ENCODE measurements at regions of chr6 and their contacts with region 1.

Region 1: DNA sequence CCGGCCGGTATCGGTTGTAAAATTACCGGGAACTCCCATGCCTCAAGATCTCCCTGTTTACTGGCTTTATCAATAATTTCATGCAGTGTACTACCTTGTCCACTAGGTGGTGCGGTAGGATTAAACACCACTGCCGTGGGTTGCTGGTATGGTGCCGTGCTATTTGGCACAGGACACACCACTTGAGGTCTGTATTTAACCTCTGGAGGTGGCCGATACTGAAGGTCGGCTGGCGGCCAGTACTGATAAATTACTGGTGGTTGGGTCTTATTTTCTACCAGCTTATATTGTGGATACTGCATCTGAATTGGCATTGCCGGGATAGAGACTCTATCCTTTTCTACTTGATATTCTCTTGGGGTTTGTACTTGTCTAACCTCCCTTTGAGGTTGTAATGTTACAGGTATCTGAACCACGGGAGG is 14.3 kb upstream of the PTCRA start:
- DNase-seq: peak; percentile 34 to 82 (median 76)
- ATAC-seq: peak; percentile 100
- H3K4me3 ChIP-seq: no peak overlapping the region
- H3K4me3 Mint-ChIP-seq: peak overlapping the region in 1 of 10 donors; percentile 65
- H3K27ac ChIP-seq: no peak overlapping the region
- H3K27ac Mint-ChIP-seq: peak overlapping the region in 1 of 9 donors; percentile 18
- H3K4me1 ChIP-seq: no peaks in the 10 kb centered on the region
- H3K4me1 Mint-ChIP-seq: peaks cover 0 to 17% (median 5%) of the 10 kb centered on the region in 7 donors
- H3K27me3 ChIP-seq: no peaks in the 10 kb centered on the region
- H3K27me3 Mint-ChIP-seq: peaks cover 0 to 6% (median 0%) of the 10 kb centered on the region in 5 donors

Region 2: DNA sequence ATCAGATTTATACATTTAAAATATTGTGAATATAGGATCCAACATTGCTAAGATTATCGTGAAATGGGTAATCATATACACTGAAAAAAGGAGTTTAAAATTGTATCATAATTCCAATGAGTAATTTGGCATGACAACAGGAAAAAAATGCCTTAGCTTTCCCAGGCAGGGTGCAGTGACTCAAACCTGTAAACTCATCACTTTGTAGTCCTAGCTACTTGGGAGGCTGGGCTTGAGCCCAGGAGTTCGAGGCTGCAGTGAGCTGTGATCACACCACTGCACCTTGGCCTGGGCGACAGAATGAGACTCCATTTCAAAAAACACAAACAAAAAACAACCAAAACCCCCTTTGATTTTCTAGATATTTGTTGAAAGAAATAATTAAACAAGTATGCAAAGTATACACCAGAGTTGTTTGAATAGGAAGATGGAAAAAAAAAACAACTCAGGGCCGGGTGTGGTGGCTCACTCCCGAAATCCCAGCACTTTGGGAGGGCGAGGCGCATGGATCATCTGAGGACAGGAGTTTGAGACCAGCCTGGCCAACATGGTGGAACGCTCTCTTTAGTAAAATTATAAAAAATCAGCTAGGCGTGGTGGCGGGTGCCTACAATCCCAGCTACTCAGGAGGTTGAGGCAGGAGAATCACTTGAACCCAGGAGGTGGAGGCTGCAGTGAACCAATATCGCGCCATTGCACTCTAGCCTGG is 548.5 kb before region 1 on chr6:
- CTCF ChIA-PET with region 1: no interaction called
- POLR2A ChIA-PET with region 1: no interaction called
- intact Hi-C with region 1: no loop called
- DNase-seq: no peak
- ATAC-seq: no peak
- H3K4me3 ChIP-seq: no peak overlapping the region
- H3K4me3 Mint-ChIP-seq: no peak overlapping the region
- H3K27ac ChIP-seq: no peak overlapping the region
- H3K27ac Mint-ChIP-seq: no peak overlapping the region
- H3K4me1 ChIP-seq: peaks cover 0 to 8% of the 10 kb centered on the region in 2 donors
- H3K4me1 Mint-ChIP-seq: peaks cover 5 to 18% (median 10%) of the 10 kb centered on the region in 7 donors
- H3K27me3 ChIP-seq: no peaks in the 10 kb centered on the region
- H3K27me3 Mint-ChIP-seq: no peaks in the 10 kb centered on the region

Region 3: GRCh38 chr6:42661540-42662153 is 239.9 kb before region 1 on chr6:
- CTCF ChIA-PET with region 1: interaction called, 6 read pairs
- POLR2A ChIA-PET with region 1: interaction called, 3 read pairs
- intact Hi-C with region 1: loop called (anchors 1 kb)
- DNase-seq: peak; percentile 73 to 89 (median 81)
- ATAC-seq: peak; percentile 99
- H3K4me3 ChIP-seq: no peak overlapping the region
- H3K4me3 Mint-ChIP-seq: no peak overlapping the region
- H3K27ac ChIP-seq: no peak overlapping the region
- H3K27ac Mint-ChIP-seq: peak overlapping the region in 8 of 9 donors; percentile 0 to 59 (median 26)
- H3K4me1 ChIP-seq: no peaks in the 10 kb centered on the region
- H3K4me1 Mint-ChIP-seq: peaks cover 0 to 6% (median 0%) of the 10 kb centered on the region in 7 donors
- H3K27me3 ChIP-seq: no peaks in the 10 kb centered on the region
- H3K27me3 Mint-ChIP-seq: no peaks in the 10 kb centered on the region

Region 4: DNA sequence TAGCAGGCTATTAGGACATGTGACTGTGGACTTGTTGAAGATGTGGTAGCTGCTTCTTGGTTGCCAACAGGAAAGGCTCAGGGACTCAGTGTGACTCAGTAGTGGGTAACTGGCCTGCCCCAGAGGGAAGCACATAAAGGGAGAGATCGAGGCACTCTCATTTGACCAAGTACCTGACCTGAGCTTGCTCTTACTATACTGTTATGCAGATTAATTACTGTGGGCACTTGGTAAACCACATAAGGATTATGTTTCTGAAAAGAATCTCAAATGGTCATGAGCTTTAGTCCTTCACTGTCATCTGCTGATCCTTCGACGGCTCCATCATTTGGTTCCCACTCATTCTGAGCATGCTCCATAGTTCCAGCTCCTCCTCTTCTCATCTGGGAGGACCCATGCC is 70.3 kb before region 1 on chr6:
- CTCF ChIA-PET with region 1: no interaction called
- POLR2A ChIA-PET with region 1: no interaction called
- intact Hi-C with region 1: no loop called
- DNase-seq: no peak
- ATAC-seq: no peak
- H3K4me3 ChIP-seq: no peak overlapping the region
- H3K4me3 Mint-ChIP-seq: no peak overlapping the region
- H3K27ac ChIP-seq: no peak overlapping the region
- H3K27ac Mint-ChIP-seq: peak overlapping the region in 6 of 9 donors; percentile 11 to 79 (median 58)
- H3K4me1 ChIP-seq: no peaks in the 10 kb centered on the region
- H3K4me1 Mint-ChIP-seq: peaks cover 11 to 27% (median 15%) of the 10 kb centered on the region in 7 donors
- H3K27me3 ChIP-seq: no peaks in the 10 kb centered on the region
- H3K27me3 Mint-ChIP-seq: no peaks in the 10 kb centered on the region

Region 5: GRCh38 chr6:42890311-42891198 is 11.0 kb before region 1 on chr6:
- CTCF ChIA-PET with region 1: interaction called, 5 read pairs
- POLR2A ChIA-PET with region 1: interaction called, 5 read pairs
- intact Hi-C with region 1: loop called in 1 of 2 experiments (anchors 1 kb)
- DNase-seq: peak; percentile 70 to 90 (median 87)
- ATAC-seq: peak; percentile 99
- H3K4me3 ChIP-seq: peak overlapping the region; percentile 89
- H3K4me3 Mint-ChIP-seq: peak overlapping the region; percentile 94 to 100 (median 98)
- H3K27ac ChIP-seq: peak overlapping the region; percentile 87
- H3K27ac Mint-ChIP-seq: peak overlapping the region; percentile 89 to 99 (median 98)
- H3K4me1 ChIP-seq: peaks cover 0 to 8% of the 10 kb centered on the region in 2 donors
- H3K4me1 Mint-ChIP-seq: peaks cover 0 to 26% (median 14%) of the 10 kb centered on the region in 7 donors
- H3K27me3 ChIP-seq: no peaks in the 10 kb centered on the region
- H3K27me3 Mint-ChIP-seq: no peaks in the 10 kb centered on the region

Region 6: GRCh38 chr6:42984001-42984923 is 82.7 kb after region 1 on chr6 and contains the start of gene PPP2R5D:
- CTCF ChIA-PET with region 1: interaction called, 3 read pairs
- POLR2A ChIA-PET with region 1: no interaction called
- intact Hi-C with region 1: loop called in 1 of 2 experiments (anchors 1 kb)
- DNase-seq: peak; percentile 81 to 98 (median 97)
- ATAC-seq: peak; percentile 97
- H3K4me3 ChIP-seq: peak within 1 kb of the TSS; percentile 64
- H3K4me3 Mint-ChIP-seq: peak within 1 kb of the TSS; percentile 87 to 99 (median 94)
- H3K27ac ChIP-seq: peak within 1 kb of the TSS; percentile 95
- H3K27ac Mint-ChIP-seq: peak within 1 kb of the TSS; percentile 89 to 99 (median 95)
- H3K4me1 ChIP-seq: peaks cover 28 to 40% of the 10 kb centered on the region in 2 donors
- H3K4me1 Mint-ChIP-seq: peaks cover 46 to 71% (median 68%) of the 10 kb centered on the region in 7 donors
- H3K27me3 ChIP-seq: no peaks in the 10 kb centered on the region
- H3K27me3 Mint-ChIP-seq: no peaks in the 10 kb centered on the region
- total RNA-seq, gene PPP2R5D: 19.7 to 60.4 (median 28.2) TPM

Region 7: GRCh38 chr6:43129434-43130194 is 228.1 kb after region 1 on chr6:
- CTCF ChIA-PET with region 1: no interaction called
- POLR2A ChIA-PET with region 1: no interaction called
- intact Hi-C with region 1: loop called in 1 of 2 experiments (anchors 5 kb)
- DNase-seq: peak in 1 of 9 donors; percentile 10
- ATAC-seq: peak; percentile 61
- H3K4me3 ChIP-seq: no peak overlapping the region
- H3K4me3 Mint-ChIP-seq: no peak overlapping the region
- H3K27ac ChIP-seq: no peak overlapping the region
- H3K27ac Mint-ChIP-seq: no peak overlapping the region
- H3K4me1 ChIP-seq: no peaks in the 10 kb centered on the region
- H3K4me1 Mint-ChIP-seq: no peaks in the 10 kb centered on the region
- H3K27me3 ChIP-seq: no peaks in the 10 kb centered on the region
- H3K27me3 Mint-ChIP-seq: no peaks in the 10 kb centered on the region

Region 8: DNA sequence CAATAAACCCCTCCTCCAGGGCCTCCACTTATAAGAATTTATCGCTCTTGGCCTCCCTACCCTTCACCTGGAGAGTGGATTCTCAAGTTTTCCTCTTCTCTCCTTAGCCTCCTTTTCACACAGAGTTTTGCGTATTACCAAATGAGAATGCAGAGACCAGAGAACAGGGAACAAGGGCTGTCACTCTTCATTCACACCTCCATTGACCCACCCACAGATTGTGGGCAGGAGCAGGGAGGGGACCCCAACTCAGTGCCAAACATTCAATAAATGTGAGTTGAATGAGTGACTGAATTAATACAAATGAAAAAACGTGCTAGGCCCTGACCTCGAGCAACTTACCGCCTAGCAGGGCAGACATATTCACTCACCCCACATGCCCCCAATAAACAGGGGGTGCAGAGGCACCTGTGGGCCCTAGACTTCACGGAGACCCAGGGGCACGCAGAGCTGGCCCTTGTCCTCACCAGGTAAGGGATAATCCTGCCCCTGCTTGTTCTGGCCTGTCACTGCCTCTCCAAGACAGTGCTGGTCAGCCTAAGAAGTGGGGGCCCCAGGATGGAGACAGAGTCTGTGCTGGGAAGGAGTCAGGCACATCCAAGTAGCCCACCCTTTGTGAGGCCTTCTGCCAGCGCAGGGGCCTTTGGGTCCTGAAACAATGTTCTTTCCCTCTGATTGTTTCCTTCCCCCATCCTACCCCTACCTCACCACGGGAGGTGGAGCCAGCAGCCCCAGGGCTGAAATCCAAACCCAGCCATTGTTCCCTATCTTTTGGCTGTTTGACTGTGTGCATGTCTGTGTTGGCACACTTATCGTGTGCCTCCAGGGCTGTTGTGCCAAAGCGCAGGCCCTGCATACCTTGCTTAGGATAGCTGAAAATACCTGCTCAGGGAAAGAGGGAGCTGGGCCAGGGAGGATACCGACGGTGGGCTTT is 567.5 kb after region 1 on chr6:
- CTCF ChIA-PET with region 1: no interaction called
- POLR2A ChIA-PET with region 1: no interaction called
- intact Hi-C with region 1: no loop called
- DNase-seq: no peak
- ATAC-seq: no peak
- H3K4me3 ChIP-seq: no peak overlapping the region
- H3K4me3 Mint-ChIP-seq: no peak overlapping the region
- H3K27ac ChIP-seq: no peak overlapping the region
- H3K27ac Mint-ChIP-seq: no peak overlapping the region
- H3K4me1 ChIP-seq: no peaks in the 10 kb centered on the region
- H3K4me1 Mint-ChIP-seq: no peaks in the 10 kb centered on the region
- H3K27me3 ChIP-seq: peaks cover 0 to 3% of the 10 kb centered on the region in 2 donors
- H3K27me3 Mint-ChIP-seq: peaks cover 12 to 24% (median 18%) of the 10 kb centered on the region in 5 donors

Region 9: DNA sequence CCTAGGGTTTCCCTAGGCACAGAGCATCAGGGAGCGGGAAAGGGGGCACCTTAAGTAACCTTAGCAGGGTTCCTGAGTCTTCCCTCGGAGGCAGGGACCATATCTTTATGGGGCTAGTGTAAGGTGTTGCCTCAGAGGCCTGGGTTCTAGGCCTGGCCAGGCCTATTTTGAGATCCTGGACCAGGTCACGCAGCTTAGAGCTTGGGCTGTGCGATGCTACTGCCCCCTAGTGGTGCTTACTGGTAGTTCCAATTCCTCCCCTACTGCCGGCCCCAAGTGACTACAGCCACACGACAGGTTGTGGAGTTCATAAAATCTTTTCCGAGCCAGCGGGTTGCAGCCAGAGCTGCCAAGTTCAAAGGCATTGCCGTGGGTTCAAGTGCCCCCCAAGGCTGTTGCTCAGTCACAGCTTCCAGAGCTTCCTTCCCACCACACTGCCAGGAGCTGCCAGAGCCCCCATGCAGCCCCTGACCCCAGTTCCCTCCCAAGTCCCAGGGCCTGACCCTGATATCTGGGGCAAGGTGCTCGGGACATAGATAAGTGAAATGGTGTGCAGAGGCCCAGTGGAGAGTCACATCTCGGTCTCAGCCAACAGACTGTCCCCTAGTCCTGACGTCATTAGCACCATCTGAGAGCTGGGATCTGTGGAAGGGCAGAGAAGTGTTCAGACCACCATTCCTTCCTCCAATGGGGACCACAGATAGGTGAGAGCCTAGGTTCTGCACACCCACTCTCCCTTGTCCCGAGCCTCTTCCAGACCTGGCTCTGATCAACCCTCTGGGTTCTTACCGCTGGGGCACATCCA is 605.3 kb after region 1 on chr6:
- CTCF ChIA-PET with region 1: no interaction called
- POLR2A ChIA-PET with region 1: no interaction called
- intact Hi-C with region 1: loop called in 1 of 2 experiments (anchors 2 kb)
- DNase-seq: peak; percentile 61 to 82 (median 70)
- ATAC-seq: peak; percentile 84
- H3K4me3 ChIP-seq: no peak overlapping the region
- H3K4me3 Mint-ChIP-seq: peak overlapping the region in 1 of 10 donors; percentile 29
- H3K27ac ChIP-seq: no peak overlapping the region
- H3K27ac Mint-ChIP-seq: peak overlapping the region in 5 of 9 donors; percentile 24 to 69 (median 58)
- H3K4me1 ChIP-seq: peaks cover 0 to 4% of the 10 kb centered on the region in 2 donors
- H3K4me1 Mint-ChIP-seq: peaks cover 10 to 29% (median 20%) of the 10 kb centered on the region in 7 donors
- H3K27me3 ChIP-seq: peaks cover 0 to 9% of the 10 kb centered on the region in 2 donors
- H3K27me3 Mint-ChIP-seq: peaks cover 15 to 22% (median 19%) of the 10 kb centered on the region in 5 donors

Measured in naive thymus-derived CD4-positive, alpha-beta T cell (primary cell).